IMR-90 (cell line): ENCODE measurements at regions of chr12 and their contacts with region 1.

Region 1: GRCh38 chr12:5428332-5429221 is 3.3 kb upstream of the NTF3 start:
- DNase-seq: peak; percentile 75
- ATAC-seq: peak; percentile 18; the same call in 1 of the 2 replicates
- H3K4me3 ChIP-seq: no peak overlapping the region; the same call in 1 of the 2 replicates
- H3K27ac ChIP-seq: no peak overlapping the region
- H3K4me1 ChIP-seq: peaks cover 9% of the 10 kb centered on the region
- H3K27me3 ChIP-seq: no peaks in the 10 kb centered on the region
- CTCF ChIP-seq: peak; percentile 89
- POLR2A ChIP-seq: 0 out of 2 replicates have a peak, but pooled peaks have one; percentile 35
- RAD21 ChIP-seq: peak; percentile 93

Region 2: DNA sequence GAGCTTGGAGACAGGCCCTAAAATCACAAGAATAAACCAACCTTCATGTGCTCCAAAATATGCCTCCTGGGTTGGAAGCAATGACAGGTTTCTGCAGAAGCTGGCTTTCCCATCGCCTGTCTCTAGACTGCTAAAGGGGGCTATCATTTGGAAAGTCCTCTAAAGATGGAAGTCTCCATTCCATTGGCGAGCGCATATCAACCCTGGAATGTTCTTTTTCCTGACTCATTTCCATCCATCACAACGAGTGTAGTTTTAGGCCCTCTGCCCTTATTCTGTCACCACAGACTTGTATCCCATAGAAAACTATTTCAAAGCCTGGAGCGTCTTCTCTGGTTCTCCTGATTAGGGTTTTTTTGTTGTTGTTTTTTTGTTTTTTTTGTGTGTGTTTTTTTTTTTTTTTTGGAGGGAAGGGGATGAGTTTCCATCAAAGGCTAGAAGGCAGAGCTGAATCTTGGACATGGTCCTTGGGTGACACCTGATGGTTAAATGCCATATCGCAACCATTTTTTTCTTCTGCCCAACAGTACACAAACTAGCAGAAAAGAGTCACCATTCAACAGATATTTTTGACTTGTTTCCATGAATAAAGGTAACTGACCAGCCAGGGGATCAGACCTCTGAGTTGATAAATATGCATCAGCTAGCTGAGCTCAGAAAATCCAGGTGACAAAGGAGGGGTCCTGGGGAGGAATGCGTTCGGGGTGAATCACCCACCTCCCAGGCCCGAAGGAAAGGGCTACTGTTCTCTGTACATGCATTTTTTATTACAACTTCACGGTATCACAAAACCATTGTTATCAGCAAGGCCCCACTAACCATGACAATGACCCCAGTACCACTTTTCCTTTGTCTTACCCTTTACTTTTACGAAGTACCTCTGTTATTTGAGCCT is 344.4 kb before region 1 on chr12:
- CTCF ChIA-PET with region 1: interaction called, 4 read pairs
- POLR2A ChIA-PET with region 1: interaction called, 6 read pairs
- dilution Hi-C with region 1: no loop called
- in situ Hi-C with region 1: no loop called
- intact Hi-C with region 1: loop called (anchors 2 kb)
- DNase-seq: peak; percentile 71
- ATAC-seq: peak; percentile 44
- H3K4me3 ChIP-seq: no peak overlapping the region
- H3K27ac ChIP-seq: no peak overlapping the region
- H3K4me1 ChIP-seq: peaks cover 20% of the 10 kb centered on the region
- H3K27me3 ChIP-seq: peaks cover 3% of the 10 kb centered on the region; the same call in 1 of the 2 replicates
- CTCF ChIP-seq: peak; percentile 79
- POLR2A ChIP-seq: no peak
- RAD21 ChIP-seq: peak; percentile 78

Region 3: GRCh38 chr12:5138845-5139244 is 289.7 kb before region 1 on chr12:
- CTCF ChIA-PET with region 1: no interaction called
- POLR2A ChIA-PET with region 1: no interaction called
- dilution Hi-C with region 1: no loop called
- in situ Hi-C with region 1: no loop called
- intact Hi-C with region 1: no loop called
- DNase-seq: peak; percentile 74
- ATAC-seq: peak; percentile 53
- H3K4me3 ChIP-seq: no peak overlapping the region
- H3K27ac ChIP-seq: no peak overlapping the region
- H3K4me1 ChIP-seq: peaks cover 15% of the 10 kb centered on the region
- H3K27me3 ChIP-seq: no peaks in the 10 kb centered on the region
- CTCF ChIP-seq: no peak
- POLR2A ChIP-seq: no peak
- RAD21 ChIP-seq: no peak

Region 4: DNA sequence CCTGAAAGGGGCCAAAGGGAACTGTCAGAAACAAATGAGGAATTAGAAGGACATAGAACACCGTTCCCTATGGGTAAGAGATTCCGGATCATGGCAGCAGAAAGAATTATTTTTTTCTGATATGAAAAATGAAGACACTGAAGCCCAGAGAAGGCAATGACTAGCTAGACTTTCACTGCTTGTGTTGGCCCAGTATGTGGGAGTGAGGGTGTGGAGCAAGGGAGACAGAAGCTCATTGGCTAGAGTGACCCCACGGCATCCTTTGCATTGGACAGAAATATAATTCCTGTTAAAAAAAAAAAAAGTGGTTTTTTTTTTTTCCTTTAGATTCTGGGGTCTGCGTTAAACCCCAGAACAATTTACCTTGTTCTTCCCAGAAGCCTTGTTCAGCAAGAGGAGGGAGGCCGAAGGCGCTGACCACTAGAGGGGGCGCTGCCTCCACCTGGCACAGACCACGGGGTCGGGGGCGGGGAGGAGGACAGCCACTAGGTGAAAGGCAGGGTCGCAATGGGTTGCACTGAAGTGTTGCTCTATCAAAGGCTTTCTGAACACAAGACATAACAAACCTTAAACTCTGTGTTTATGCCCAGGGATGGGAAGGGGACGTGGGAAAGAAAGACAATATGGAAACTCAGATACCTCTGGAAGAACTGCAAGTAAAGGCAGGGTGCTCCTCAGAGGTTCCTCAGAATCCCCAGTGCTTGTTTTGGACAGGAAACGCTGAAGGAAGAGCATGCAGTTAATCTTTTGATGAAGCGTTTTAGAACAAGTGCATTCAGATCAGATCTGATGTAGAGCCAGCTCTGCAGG is 228.1 kb before region 1 on chr12:
- CTCF ChIA-PET with region 1: no interaction called
- POLR2A ChIA-PET with region 1: no interaction called
- dilution Hi-C with region 1: no loop called
- in situ Hi-C with region 1: no loop called
- intact Hi-C with region 1: no loop called
- DNase-seq: peak; percentile 28
- ATAC-seq: peak; percentile 69
- H3K4me3 ChIP-seq: no peak overlapping the region
- H3K27ac ChIP-seq: no peak overlapping the region
- H3K4me1 ChIP-seq: peaks cover 4% of the 10 kb centered on the region; the same call in 1 of the 2 replicates
- H3K27me3 ChIP-seq: no peaks in the 10 kb centered on the region
- CTCF ChIP-seq: peak; percentile 58
- POLR2A ChIP-seq: no peak
- RAD21 ChIP-seq: peak; percentile 66

Region 5: DNA sequence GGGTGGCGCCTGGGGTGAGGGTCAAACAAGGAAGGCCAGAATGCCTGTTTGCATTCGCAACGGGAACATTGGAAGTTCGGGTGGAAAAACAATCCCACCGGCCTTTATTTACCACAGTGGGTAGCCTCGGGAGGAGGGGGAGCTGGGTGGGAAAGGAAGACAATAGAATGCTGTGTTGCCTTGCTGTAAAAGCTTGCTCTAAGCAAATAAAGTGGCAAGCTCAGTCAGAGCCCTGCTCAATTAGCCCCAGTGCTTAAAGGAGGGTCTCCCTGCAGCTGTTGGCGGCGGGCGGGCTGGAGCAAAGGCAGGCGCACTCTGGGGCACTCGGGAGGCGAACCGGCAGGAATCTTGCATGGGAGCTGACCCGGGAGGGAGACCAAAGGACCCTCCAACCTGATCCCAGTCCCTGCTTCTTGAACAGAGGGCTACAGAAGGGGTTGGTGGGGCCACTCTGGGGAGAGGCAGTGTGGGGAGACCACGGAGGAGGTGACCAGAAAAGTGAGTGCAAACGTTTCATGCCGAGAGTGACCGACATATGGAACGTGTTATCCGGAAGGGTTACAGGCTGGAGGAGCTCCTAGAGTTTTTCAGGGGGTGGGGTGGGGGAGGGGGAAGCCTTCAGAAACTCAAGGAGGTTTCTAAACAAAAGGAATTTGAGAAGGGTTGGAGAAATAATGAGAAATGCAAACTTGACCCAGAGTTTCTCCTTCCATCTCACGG is 51.8 kb after region 1 on chr12:
- CTCF ChIA-PET with region 1: interaction called, 3 read pairs
- POLR2A ChIA-PET with region 1: interaction called, 12 read pairs
- dilution Hi-C with region 1: no loop called
- in situ Hi-C with region 1: no loop called
- intact Hi-C with region 1: no loop called
- DNase-seq: peak; percentile 59
- ATAC-seq: peak; percentile 67
- H3K4me3 ChIP-seq: no peak overlapping the region
- H3K27ac ChIP-seq: peak overlapping the region; percentile 97
- H3K4me1 ChIP-seq: peaks cover 30% of the 10 kb centered on the region
- H3K27me3 ChIP-seq: no peaks in the 10 kb centered on the region
- CTCF ChIP-seq: no peak
- POLR2A ChIP-seq: no peak
- RAD21 ChIP-seq: no peak

Region 6: GRCh38 chr12:5648692-5649359 is 220.2 kb after region 1 on chr12:
- CTCF ChIA-PET with region 1: interaction called, 13 read pairs
- POLR2A ChIA-PET with region 1: no interaction called
- dilution Hi-C with region 1: no loop called
- in situ Hi-C with region 1: loop called (anchors 10 kb)
- intact Hi-C with region 1: loop called (anchors 1 kb)
- DNase-seq: peak; percentile 58
- ATAC-seq: peak; percentile 88
- H3K4me3 ChIP-seq: no peak overlapping the region
- H3K27ac ChIP-seq: no peak overlapping the region
- H3K4me1 ChIP-seq: no peaks in the 10 kb centered on the region
- H3K27me3 ChIP-seq: peaks cover 17% of the 10 kb centered on the region
- CTCF ChIP-seq: peak; percentile 67
- POLR2A ChIP-seq: no peak
- RAD21 ChIP-seq: peak; percentile 74

Region 7: DNA sequence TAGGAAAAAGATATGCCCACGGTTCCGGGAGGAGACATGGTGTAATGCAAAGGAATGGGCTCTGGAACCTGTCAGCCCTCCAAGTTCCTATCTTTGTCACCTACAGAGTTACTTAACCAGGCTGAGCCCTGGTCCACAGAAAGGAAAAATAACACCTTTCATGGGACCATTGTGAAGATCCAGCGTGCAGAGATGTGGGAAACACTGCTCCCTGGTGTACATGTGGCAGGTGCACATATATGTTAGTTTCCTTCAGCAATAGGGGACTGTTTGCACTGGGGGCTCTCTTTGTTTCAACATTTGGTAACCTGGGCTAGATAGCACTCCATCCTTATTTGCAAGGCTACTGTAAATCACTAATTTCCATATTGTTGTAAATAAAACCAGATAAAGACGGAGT is 444.2 kb after region 1 on chr12:
- CTCF ChIA-PET with region 1: no interaction called
- POLR2A ChIA-PET with region 1: no interaction called
- dilution Hi-C with region 1: no loop called
- in situ Hi-C with region 1: no loop called
- intact Hi-C with region 1: loop called (anchors 2 kb)
- DNase-seq: peak; percentile 20
- ATAC-seq: peak; percentile 35
- H3K4me3 ChIP-seq: no peak overlapping the region
- H3K27ac ChIP-seq: no peak overlapping the region
- H3K4me1 ChIP-seq: no peaks in the 10 kb centered on the region
- H3K27me3 ChIP-seq: peaks cover 10% of the 10 kb centered on the region
- CTCF ChIP-seq: peak; percentile 41
- POLR2A ChIP-seq: no peak
- RAD21 ChIP-seq: peak; percentile 46